Right ventricle myocardium inferior (tissue), 1 donor: ENCODE measurements at regions of chr12 and their contacts with region 1.

Region 1: GRCh38 chr12:27940756-27941402 is 31.7 kb downstream of the PTHLH start:
- DNase-seq: peak; percentile 79
- ATAC-seq: no peak

Region 2: DNA sequence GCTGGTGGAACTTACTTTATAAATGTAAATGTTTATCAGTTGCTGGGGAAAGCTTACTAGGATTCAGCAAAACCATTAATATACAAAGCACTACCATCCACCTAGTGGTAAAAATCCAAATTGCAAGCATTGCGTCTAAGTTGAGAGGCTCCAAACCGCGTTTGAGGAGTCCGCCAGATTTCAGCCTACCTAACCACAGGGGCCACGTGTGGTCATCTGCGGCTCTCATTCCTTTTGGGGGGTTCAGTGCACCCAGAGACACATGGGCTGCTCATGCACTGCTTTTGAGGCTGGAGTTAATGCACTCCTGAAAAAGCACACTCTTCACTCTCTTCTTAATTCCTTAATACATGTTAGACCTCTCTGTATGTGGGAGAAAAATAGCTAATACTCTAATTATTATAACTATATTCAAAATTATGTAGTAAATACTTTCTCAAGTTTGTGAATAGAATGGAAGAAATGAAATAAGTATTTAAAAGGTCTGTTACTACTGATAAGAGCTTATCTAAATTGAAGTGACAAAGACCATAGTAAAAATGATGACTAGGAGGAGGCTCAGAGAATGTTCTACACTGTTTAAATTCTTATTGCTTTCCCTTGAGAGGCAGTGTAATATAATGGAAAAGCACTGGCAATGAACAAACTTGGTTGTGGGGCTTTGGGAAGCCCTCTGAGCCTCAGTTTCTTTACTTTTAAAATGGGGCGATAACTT is 119.5 kb before region 1 on chr12:
- intact Hi-C with region 1: loop called (anchors 10 kb)
- DNase-seq: no peak
- ATAC-seq: peak; percentile 51